ENCODE measurements at regions of chr6 and their contacts with region 1.

Region 1: GRCh38 chr6:127900935-127901334 is at the start of gene THEMIS:
- DNase-seq: peak; percentile 61
- H3K4me3 Mint-ChIP-seq: peak within 1 kb of the TSS; percentile 93
- H3K27ac Mint-ChIP-seq: peak within 1 kb of the TSS; percentile 91
- H3K4me1 Mint-ChIP-seq: peaks cover 58% of the 10 kb centered on the region
- H3K27me3 Mint-ChIP-seq: no peaks in the 10 kb centered on the region
- total RNA-seq, gene THEMIS: 65.6 to 68.2 TPM

Region 2: DNA sequence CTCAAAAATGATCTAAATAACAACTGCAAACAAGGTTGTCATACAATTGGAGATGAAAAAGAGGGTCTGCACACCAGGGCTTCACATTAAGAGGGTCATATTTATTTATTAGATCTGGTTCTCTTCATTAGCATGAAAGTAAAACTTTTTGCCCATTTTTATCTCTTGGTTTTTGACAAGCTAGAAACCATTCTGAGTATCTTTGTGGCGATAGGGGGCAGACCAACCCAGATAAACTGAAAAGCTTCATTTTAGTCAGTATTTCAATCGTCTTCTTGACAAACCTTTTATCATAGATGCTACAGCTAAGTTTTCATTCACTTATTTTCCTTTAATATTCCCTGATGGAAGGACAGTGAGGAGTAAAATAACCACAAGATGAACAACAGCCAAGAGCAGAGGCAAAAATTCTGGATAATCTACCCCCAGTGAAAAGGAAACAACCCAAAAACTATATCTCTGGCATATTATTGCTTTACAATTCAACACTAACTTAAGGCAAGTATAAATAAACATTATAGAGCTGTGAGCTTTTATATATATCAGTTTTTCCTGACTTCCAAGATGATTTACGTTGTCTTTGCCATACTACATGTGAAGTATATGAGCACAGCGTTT is 45.3 kb before region 1 on chr6:
- CTCF ChIA-PET with region 1: interaction called, 7 read pairs
- POLR2A ChIA-PET with region 1: interaction called, 10 read pairs
- DNase-seq: peak; percentile 50
- H3K4me3 Mint-ChIP-seq: no peak overlapping the region
- H3K27ac Mint-ChIP-seq: peak overlapping the region; percentile 12
- H3K4me1 Mint-ChIP-seq: peaks cover 35% of the 10 kb centered on the region
- H3K27me3 Mint-ChIP-seq: no peaks in the 10 kb centered on the region

Region 3: DNA sequence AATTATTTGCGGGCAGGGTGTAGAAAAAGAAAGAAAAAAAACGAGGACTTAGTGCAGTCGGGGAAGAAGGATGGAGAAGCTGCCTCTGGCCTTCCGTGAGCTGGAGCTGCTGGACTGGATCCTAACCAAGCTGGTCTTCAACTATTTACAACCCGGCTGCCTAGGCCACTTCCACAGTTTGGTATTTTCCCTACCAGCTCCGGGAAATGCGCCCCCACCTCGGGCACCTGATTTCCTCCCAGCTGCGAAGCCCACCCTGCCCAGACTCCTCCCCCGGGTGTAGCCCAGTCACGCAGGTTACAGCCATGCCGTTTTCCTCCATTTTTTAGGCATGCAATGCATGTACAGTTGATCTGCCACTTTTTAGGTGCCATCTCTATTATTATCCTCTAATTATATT is 21.2 kb before region 1 on chr6:
- CTCF ChIA-PET with region 1: interaction called, 3 read pairs
- POLR2A ChIA-PET with region 1: interaction called, 18 read pairs
- DNase-seq: no peak
- H3K4me3 Mint-ChIP-seq: peak overlapping the region; percentile 46
- H3K27ac Mint-ChIP-seq: peak overlapping the region; percentile 69
- H3K4me1 Mint-ChIP-seq: peaks cover 67% of the 10 kb centered on the region
- H3K27me3 Mint-ChIP-seq: no peaks in the 10 kb centered on the region

Region 4: GRCh38 chr6:127918506-127919427 is 17.8 kb after region 1 on chr6:
- CTCF ChIA-PET with region 1: interaction called, 3 read pairs
- POLR2A ChIA-PET with region 1: interaction called, 21 read pairs
- DNase-seq: no peak
- H3K4me3 Mint-ChIP-seq: peak overlapping the region; percentile 54
- H3K27ac Mint-ChIP-seq: peak overlapping the region; percentile 62
- H3K4me1 Mint-ChIP-seq: peaks cover 74% of the 10 kb centered on the region
- H3K27me3 Mint-ChIP-seq: no peaks in the 10 kb centered on the region

Region 5: GRCh38 chr6:127938701-127939100 is 37.8 kb after region 1 on chr6:
- CTCF ChIA-PET with region 1: interaction called, 7 read pairs
- POLR2A ChIA-PET with region 1: interaction called, 30 read pairs
- DNase-seq: no peak
- H3K4me3 Mint-ChIP-seq: no peak overlapping the region
- H3K27ac Mint-ChIP-seq: peak overlapping the region; percentile 65
- H3K4me1 Mint-ChIP-seq: peaks cover 50% of the 10 kb centered on the region
- H3K27me3 Mint-ChIP-seq: no peaks in the 10 kb centered on the region

Region 6: GRCh38 chr6:127951172-127951917 is 50.4 kb after region 1 on chr6:
- CTCF ChIA-PET with region 1: interaction called, 3 read pairs
- POLR2A ChIA-PET with region 1: interaction called, 10 read pairs
- DNase-seq: no peak
- H3K4me3 Mint-ChIP-seq: peak overlapping the region; percentile 17
- H3K27ac Mint-ChIP-seq: peak overlapping the region; percentile 94
- H3K4me1 Mint-ChIP-seq: peaks cover 56% of the 10 kb centered on the region
- H3K27me3 Mint-ChIP-seq: no peaks in the 10 kb centered on the region

Region 7: DNA sequence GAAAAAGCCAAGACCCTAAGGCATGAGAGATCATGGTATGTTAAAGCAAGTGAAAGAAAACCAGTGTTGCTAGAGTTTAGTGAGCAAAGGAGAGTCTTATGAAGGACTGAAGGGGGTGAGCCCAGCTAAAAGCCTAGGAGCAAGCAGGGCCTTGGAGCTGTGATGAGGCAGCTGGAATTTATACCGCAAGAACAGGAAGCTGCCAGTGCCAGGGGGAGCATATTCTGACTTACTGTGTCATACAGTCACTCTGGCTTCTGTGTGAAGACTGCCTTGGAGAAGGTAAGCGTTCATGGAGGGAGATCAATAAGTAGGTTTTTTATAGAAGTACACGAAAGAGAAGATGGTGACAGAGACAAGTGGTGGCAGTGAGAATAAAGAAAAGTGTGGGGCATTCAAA is 308.8 kb after region 1 on chr6:
- CTCF ChIA-PET with region 1: no interaction called
- POLR2A ChIA-PET with region 1: no interaction called
- DNase-seq: no peak
- H3K4me3 Mint-ChIP-seq: no peak overlapping the region
- H3K27ac Mint-ChIP-seq: no peak overlapping the region
- H3K4me1 Mint-ChIP-seq: peaks cover 3% of the 10 kb centered on the region
- H3K27me3 Mint-ChIP-seq: no peaks in the 10 kb centered on the region